IMR-90 (cell line): ENCODE measurements at regions of chr6 and their contacts with region 1.

Region 1: DNA sequence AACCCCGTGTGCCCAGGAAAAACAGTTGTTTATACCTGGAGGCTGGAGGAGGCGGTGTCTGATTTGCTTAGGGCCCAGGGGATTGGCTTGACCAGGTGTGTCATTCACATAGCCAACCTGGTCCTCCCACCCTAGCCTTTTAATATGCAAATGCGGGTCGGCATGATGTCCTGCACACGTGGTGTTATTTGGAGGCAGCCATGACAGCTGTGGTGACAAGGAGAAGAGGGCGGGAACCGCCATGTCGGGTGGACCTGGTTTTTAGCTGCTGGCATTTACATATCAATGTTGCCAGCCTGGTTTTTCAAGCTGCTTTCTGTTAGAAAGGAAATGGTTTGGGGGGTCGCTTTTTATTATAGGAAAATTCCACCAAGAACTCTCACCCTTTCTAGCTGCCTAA is 291.4 kb upstream of the QKI start:
- DNase-seq: no peak
- ATAC-seq: no peak
- H3K4me3 ChIP-seq: no peak overlapping the region
- H3K27ac ChIP-seq: no peak overlapping the region
- H3K4me1 ChIP-seq: no peaks in the 10 kb centered on the region
- H3K27me3 ChIP-seq: no peaks in the 10 kb centered on the region
- CTCF ChIP-seq: no peak
- POLR2A ChIP-seq: no peak
- RAD21 ChIP-seq: no peak

Region 2: GRCh38 chr6:161835500-161836215 is 1287.4 kb before region 1 on chr6:
- CTCF ChIA-PET with region 1: no interaction called
- POLR2A ChIA-PET with region 1: interaction called, 15 read pairs
- dilution Hi-C with region 1: no loop called
- in situ Hi-C with region 1: no loop called
- intact Hi-C with region 1: no loop called
- DNase-seq: no peak
- ATAC-seq: no peak
- H3K4me3 ChIP-seq: no peak overlapping the region
- H3K27ac ChIP-seq: no peak overlapping the region
- H3K4me1 ChIP-seq: no peaks in the 10 kb centered on the region
- H3K27me3 ChIP-seq: no peaks in the 10 kb centered on the region
- CTCF ChIP-seq: no peak
- POLR2A ChIP-seq: no peak
- RAD21 ChIP-seq: no peak

Region 3: GRCh38 chr6:163170294-163170883 is 47.3 kb after region 1 on chr6:
- CTCF ChIA-PET with region 1: no interaction called
- POLR2A ChIA-PET with region 1: no interaction called
- dilution Hi-C with region 1: no loop called
- in situ Hi-C with region 1: no loop called
- intact Hi-C with region 1: no loop called
- DNase-seq: no peak
- ATAC-seq: no peak
- H3K4me3 ChIP-seq: no peak overlapping the region
- H3K27ac ChIP-seq: no peak overlapping the region
- H3K4me1 ChIP-seq: no peaks in the 10 kb centered on the region
- H3K27me3 ChIP-seq: no peaks in the 10 kb centered on the region
- CTCF ChIP-seq: 0 out of 2 replicates have a peak, but pooled peaks have one; percentile 11
- POLR2A ChIP-seq: no peak
- RAD21 ChIP-seq: no peak